ENCODE measurements at regions of chr16 and their contacts with region 1.

Region 1: GRCh38 chr16:25224731-25225319 is 8.1 kb downstream of the AQP8 start:
- DNase-seq: no peak
- H3K4me3 ChIP-seq: no peak overlapping the region
- H3K27ac ChIP-seq: no peak overlapping the region
- H3K27me3 ChIP-seq: peaks cover 10% of the 10 kb centered on the region
- CTCF ChIP-seq: no peak

Region 2: DNA sequence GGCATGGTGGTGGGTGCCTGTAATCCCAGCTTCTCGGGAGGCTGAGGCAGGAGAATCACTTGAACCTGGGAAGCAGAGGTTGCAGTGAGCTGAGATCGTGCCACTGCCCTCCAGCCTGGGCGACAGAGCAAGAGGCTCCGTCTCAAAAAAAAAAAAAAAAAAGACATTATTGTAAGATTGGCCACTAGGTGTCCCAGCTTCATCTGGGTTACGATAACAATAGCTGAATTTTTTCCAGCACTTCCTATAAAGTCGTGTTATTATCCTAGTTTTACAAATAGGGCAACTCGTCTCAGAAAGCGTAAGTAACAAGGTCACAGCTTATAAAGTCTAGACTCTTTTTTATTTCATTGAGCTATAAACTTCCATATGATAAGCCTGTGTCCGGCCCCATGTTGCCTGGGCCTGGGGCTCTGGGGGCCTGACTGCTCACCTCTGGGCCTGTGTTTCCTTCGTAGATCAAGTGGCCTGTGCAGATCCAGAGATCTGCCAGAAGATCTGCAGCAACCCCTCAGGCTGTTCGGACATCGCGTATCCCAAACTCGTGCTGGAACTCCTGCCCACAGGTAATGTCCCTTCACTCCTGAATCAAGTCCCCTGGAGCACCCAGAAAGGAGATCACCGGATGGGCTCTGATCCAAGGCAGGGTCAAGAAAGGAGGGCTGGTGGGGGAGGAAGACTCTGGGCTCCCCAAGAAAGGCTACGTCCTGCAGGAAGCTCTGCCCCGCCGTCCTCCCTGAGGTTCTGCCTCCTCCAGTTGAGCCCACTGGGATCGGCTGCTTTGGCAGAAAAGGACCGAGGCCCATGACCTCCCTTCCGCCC is 318.4 kb before region 1 on chr16:
- CTCF ChIA-PET with region 1: interaction called, 25 read pairs
- POLR2A ChIA-PET with region 1: no interaction called
- DNase-seq: no peak
- H3K4me3 ChIP-seq: no peak overlapping the region
- H3K27ac ChIP-seq: no peak overlapping the region
- H3K27me3 ChIP-seq: no peaks in the 10 kb centered on the region
- CTCF ChIP-seq: peak; percentile 46; the same call in 1 of the 2 replicates

Region 3: DNA sequence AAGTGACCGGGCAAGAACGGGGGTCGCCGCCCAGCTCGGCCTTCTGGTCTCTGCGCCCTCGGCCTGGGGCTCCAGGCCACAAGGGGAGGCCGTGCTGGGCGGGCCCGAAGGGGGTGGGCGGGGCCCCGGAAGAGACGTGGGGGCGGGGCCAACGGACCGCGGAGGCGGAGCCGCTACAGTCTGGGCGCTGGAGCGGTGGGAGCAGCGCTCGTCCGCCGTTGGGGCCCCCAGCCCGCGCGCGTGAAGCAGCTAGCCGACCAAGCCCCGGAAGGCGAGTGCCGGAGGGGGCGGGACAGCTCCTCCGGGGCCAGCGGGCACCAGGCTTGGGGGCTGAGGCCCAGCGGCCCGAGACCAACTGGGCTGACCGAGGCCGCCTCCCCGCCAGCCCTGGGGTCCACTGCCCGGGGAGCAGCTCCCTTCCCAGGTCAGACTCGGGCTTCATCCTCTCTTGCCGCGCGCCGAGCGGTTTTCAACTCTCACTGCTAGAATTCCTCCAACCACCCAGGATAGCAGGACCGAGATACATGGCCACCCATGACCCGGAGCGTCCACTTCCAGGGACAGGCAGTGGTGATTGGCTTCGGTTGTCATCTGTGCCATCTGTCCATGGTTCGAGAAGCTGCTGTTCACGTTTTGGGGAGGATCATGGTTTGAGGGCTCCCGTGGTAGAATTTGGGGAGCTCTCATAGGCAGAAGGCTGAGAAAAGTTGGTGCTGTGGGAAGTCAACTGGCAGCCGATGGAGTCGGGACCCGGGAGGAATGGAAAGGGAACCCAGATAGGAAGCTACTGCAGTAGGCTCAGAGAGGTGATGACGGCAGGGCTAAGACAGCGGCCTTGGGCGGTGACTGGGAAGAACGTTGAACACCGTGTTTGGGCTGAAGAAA is 157.8 kb before region 1 on chr16:
- CTCF ChIA-PET with region 1: interaction called, 12 read pairs
- POLR2A ChIA-PET with region 1: no interaction called
- DNase-seq: no peak
- H3K4me3 ChIP-seq: peak overlapping the region; percentile 84
- H3K27ac ChIP-seq: peak overlapping the region; percentile 80
- H3K27me3 ChIP-seq: no peaks in the 10 kb centered on the region
- CTCF ChIP-seq: no peak

Region 4: GRCh38 chr16:25135254-25135878 is 89.5 kb before region 1 on chr16:
- CTCF ChIA-PET with region 1: interaction called, 14 read pairs
- POLR2A ChIA-PET with region 1: no interaction called
- DNase-seq: peak; percentile 63
- H3K4me3 ChIP-seq: no peak overlapping the region
- H3K27ac ChIP-seq: peak overlapping the region; percentile 42
- H3K27me3 ChIP-seq: no peaks in the 10 kb centered on the region
- CTCF ChIP-seq: peak; percentile 67

Region 5: DNA sequence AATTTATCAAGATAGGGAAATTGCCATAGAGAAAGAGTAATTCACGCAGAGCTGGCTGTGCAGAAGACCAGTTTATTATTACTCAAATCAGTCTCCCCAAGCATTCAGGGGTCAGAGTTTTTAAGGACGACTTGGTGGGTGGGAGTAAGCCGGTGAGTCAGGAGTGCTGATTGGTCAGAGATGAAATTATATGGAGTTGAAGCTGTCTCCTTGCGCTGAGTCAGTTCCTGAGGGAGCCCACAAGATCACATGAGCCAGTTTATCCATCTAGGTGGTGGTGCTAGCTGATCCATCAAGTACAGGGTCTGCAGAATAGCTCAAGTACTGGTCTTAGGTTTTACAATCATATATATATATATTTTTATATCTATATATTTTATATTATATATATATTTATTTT is 14.1 kb before region 1 on chr16:
- CTCF ChIA-PET with region 1: interaction called, 24 read pairs
- POLR2A ChIA-PET with region 1: no interaction called
- DNase-seq: peak; percentile 39
- H3K4me3 ChIP-seq: no peak overlapping the region
- H3K27ac ChIP-seq: no peak overlapping the region
- H3K27me3 ChIP-seq: peaks cover 3% of the 10 kb centered on the region
- CTCF ChIP-seq: no peak

Region 6: DNA sequence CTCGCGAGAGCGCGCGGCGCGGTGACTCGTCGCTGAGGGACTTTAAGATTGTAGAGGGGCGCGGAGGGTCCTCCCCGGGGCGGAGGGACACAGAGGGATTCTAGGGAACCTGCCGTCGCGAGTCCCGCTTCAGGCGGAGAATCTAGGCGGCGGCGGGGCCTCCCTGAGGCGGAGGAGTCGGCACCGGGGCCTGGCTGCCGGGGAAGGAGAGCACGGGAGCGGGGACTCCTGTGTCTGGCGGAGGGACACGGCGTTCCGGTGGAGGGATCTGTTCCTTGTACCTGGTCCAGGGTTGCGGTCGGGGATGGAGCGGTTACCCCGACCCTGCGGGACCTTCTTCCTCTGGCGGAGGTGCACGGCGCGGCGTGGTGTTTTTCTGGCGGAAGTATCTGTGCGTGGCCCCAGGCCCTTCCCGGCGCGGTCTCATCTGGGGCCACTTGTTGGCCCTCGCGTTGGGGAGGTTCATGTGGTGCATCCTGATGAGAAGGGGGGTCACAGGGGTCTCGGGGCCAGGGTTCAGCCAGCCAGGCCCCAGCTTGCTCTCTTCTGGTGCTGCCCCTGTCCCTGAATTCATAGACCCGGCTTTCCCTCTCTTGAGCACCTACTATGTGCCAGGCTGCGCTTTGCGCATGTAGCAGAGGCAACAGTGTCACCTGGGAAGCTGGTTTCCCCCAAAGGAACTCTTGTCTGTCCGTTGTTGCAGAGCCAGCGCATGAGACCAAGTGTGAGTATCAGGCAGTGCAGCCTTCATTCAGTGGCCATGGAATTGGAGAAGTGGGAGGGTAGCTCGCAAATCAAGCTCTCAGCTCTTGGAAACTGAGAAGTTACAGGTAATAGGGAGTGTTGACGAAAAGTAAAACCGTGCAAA is 33.4 kb after region 1 on chr16:
- CTCF ChIA-PET with region 1: interaction called, 17 read pairs
- POLR2A ChIA-PET with region 1: no interaction called
- DNase-seq: peak; percentile 77
- H3K4me3 ChIP-seq: peak overlapping the region; percentile 85
- H3K27ac ChIP-seq: peak overlapping the region; percentile 99
- H3K27me3 ChIP-seq: no peaks in the 10 kb centered on the region
- CTCF ChIP-seq: no peak

Region 7: GRCh38 chr16:25291580-25291979 is 66.8 kb after region 1 on chr16:
- CTCF ChIA-PET with region 1: no interaction called
- POLR2A ChIA-PET with region 1: no interaction called
- DNase-seq: no peak
- H3K4me3 ChIP-seq: no peak overlapping the region
- H3K27ac ChIP-seq: no peak overlapping the region
- H3K27me3 ChIP-seq: no peaks in the 10 kb centered on the region
- CTCF ChIP-seq: no peak

Region 8: GRCh38 chr16:25372716-25373115 is 147.9 kb after region 1 on chr16:
- CTCF ChIA-PET with region 1: no interaction called
- POLR2A ChIA-PET with region 1: no interaction called
- DNase-seq: no peak
- H3K4me3 ChIP-seq: no peak overlapping the region
- H3K27ac ChIP-seq: no peak overlapping the region
- H3K27me3 ChIP-seq: no peaks in the 10 kb centered on the region
- CTCF ChIP-seq: no peak

Measured in AG04450 (cell line).